Mammary epithelial cell (primary cell): ENCODE measurements at regions of chr16 and their contacts with region 1.

Region 1: DNA sequence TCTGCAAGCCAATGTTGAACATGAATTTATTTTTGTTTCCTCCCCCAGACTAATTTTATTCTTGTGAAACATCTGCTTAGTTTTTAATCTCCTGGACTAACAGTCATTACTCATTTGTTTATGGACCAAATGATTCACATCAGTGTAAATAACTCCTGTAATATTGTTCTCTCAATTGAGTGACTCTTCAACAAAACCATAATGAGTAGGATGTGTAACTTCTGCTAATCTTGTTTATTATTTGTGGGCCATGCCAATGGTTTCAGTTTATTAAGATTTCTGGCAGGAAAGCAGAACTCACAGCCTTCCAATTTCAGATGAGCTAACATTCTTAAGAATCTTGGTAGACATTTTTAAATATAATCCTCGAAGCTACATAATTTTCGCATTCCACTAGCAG is 1216.3 kb upstream of the GOT2 start:
- DNase-seq: peak; percentile 15
- H3K4me3 ChIP-seq: no peak overlapping the region
- H3K27ac ChIP-seq: no peak overlapping the region
- H3K4me1 ChIP-seq: no peaks in the 10 kb centered on the region
- H3K27me3 ChIP-seq: no peaks in the 10 kb centered on the region
- CTCF ChIP-seq: no peak

Region 2: GRCh38 chr16:59859676-59860402 is 90.6 kb before region 1 on chr16:
- CTCF ChIA-PET with region 1: no interaction called
- dilution Hi-C with region 1: no loop called
- in situ Hi-C with region 1: loop called in 1 of 2 experiments (anchors 5 kb)
- intact Hi-C with region 1: no loop called
- DNase-seq: no peak
- H3K4me3 ChIP-seq: no peak overlapping the region
- H3K27ac ChIP-seq: no peak overlapping the region
- H3K4me1 ChIP-seq: no peaks in the 10 kb centered on the region
- H3K27me3 ChIP-seq: no peaks in the 10 kb centered on the region
- CTCF ChIP-seq: no peak